ENCODE measurements at regions of chr19 and their contacts with region 1.

Region 1: DNA sequence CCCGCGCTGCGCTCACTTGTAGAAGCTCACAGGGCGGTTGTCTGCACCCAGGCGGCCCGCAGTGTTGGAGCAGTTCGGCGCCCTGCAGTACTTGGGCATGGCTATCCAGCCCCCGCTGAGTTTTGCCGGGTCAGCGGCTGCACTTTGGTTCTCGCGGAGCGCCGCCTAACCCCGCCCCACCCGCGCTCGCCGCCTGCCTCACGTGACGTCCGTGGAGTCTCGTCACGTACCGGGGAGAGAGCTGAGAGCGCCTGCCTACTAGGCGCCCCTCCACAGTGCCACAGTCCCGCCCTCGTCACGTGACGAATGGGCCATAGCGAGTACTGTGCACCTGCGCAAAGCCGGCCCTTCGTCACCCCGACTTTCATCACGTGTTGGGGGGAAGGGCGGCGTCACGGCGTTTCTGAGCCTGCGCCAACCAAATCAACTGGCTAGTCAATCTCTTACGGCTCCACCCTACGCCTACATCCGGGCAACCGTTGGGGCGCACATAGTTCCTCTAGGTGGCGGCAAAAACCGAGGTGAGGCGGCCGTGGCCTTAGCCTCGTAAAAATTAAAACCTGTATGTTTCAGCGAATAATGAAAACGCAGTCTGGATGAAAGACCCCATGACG is at the start of gene THAP8:
- DNase-seq: peak; percentile 100
- H3K4me3 Mint-ChIP-seq: peak within 1 kb of the TSS; percentile 94
- H3K27ac Mint-ChIP-seq: peak within 1 kb of the TSS; percentile 98
- H3K4me1 Mint-ChIP-seq: peaks cover 18% of the 10 kb centered on the region
- H3K27me3 Mint-ChIP-seq: no peaks in the 10 kb centered on the region
- total RNA-seq, gene THAP8: 1.1 to 1.2 TPM

Region 2: DNA sequence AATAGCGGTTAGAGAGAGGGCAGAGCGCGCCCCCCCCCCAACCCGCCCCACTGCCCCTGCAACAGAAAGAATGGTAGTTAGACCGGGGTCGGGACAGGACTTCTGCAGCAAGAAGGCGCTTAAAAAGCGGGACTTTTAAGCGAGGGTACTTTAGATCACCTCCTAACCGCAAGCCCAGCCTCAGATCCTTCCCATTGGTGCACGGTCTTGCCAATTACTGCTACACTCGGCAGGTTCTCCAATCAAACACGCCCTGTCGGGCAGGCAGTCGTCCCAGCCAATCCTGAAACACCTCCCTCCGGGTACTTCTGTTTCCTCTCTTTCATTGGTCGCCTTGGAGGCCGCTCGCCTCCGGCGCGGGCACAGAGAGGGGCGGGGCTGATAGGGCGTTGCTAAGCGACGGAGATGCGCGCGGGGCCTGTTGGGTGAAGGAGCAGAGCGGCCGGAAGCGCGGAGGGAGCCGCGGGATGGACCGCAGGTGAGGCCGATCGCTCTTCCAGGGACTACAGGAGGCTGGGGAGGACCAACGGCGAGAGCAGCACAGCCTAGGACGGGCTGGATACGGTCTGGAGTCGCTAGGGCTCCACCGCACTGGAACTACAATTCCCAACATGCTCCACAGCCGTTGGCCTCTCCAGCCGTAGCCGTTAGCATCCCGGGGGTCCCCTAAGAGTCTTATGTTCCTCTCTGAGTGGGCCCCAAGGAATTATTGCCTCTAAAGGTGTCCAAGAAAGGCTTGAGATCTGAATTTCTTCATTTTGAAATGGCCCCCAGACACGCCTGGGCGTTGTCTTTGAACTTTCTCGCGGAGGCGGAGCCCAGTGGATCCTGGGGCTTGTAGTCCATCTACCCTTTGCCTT is 296.2 kb before region 1 on chr19 and contains the start of gene PROSER3:
- CTCF ChIA-PET with region 1: no interaction called
- intact Hi-C with region 1: loop called (anchors 2 kb)
- DNase-seq: peak; percentile 99
- H3K4me3 Mint-ChIP-seq: peak within 1 kb of the TSS; percentile 90
- H3K27ac Mint-ChIP-seq: peak within 1 kb of the TSS; percentile 92
- H3K4me1 Mint-ChIP-seq: peaks cover 20% of the 10 kb centered on the region
- H3K27me3 Mint-ChIP-seq: peaks cover 8% of the 10 kb centered on the region
- total RNA-seq, gene PROSER3: 45.3 to 47.4 TPM

Region 3: GRCh38 chr19:35995048-35995993 is 58.9 kb before region 1 on chr19 and contains the start of gene SDHAF1:
- CTCF ChIA-PET with region 1: interaction called, 3 read pairs
- intact Hi-C with region 1: loop called (anchors 1 kb)
- DNase-seq: peak; percentile 97
- H3K4me3 Mint-ChIP-seq: peak within 1 kb of the TSS; percentile 97
- H3K27ac Mint-ChIP-seq: peak within 1 kb of the TSS; percentile 89
- H3K4me1 Mint-ChIP-seq: peaks cover 37% of the 10 kb centered on the region
- H3K27me3 Mint-ChIP-seq: no peaks in the 10 kb centered on the region
- total RNA-seq, gene SDHAF1: 13.1 to 13.8 TPM

Region 4: DNA sequence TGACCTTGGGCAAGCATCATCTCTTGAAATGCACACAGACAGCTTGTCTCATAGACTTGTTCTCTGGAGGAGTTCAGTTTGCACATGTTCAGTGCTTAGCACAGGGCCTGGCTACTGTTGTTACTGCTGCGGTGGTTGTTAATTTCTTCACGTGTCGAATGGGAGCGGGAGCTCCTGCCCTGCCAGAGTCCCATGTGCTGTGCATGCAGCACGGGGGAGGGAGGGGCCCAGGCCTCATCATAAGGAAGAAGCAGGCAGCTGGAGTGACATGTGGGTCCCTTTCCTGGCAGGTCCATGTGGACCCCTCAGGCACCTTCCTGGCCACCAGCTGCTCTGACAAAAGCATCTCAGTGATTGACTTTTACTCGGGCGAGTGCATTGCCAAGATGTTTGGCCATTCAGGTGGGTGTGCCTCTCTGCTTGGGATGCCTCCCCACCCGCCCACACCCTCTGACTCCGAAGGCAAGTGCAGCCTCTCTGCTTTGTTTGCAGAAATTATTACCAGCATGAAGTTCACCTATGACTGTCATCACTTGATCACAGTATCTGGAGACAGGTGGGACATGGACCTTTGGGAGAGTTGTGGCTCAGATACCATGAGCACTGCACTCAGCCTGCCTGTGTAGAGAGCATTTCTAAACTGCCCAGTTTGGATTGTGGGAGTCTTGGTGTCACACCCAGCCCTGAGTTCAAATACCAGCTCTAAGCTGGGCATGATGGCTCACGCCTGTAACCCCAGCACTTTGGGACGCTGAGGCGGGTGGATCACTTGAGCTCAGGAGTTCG is 36.9 kb after region 1 on chr19:
- CTCF ChIA-PET with region 1: no interaction called
- intact Hi-C with region 1: no loop called
- DNase-seq: no peak
- H3K4me3 Mint-ChIP-seq: no peak overlapping the region
- H3K27ac Mint-ChIP-seq: no peak overlapping the region
- H3K4me1 Mint-ChIP-seq: peaks cover 12% of the 10 kb centered on the region
- H3K27me3 Mint-ChIP-seq: no peaks in the 10 kb centered on the region

Region 5: GRCh38 chr19:36121486-36122124 is 67.4 kb after region 1 on chr19:
- CTCF ChIA-PET with region 1: no interaction called
- intact Hi-C with region 1: no loop called
- DNase-seq: no peak
- H3K4me3 Mint-ChIP-seq: no peak overlapping the region
- H3K27ac Mint-ChIP-seq: no peak overlapping the region
- H3K4me1 Mint-ChIP-seq: peaks cover 12% of the 10 kb centered on the region
- H3K27me3 Mint-ChIP-seq: no peaks in the 10 kb centered on the region

Region 6: DNA sequence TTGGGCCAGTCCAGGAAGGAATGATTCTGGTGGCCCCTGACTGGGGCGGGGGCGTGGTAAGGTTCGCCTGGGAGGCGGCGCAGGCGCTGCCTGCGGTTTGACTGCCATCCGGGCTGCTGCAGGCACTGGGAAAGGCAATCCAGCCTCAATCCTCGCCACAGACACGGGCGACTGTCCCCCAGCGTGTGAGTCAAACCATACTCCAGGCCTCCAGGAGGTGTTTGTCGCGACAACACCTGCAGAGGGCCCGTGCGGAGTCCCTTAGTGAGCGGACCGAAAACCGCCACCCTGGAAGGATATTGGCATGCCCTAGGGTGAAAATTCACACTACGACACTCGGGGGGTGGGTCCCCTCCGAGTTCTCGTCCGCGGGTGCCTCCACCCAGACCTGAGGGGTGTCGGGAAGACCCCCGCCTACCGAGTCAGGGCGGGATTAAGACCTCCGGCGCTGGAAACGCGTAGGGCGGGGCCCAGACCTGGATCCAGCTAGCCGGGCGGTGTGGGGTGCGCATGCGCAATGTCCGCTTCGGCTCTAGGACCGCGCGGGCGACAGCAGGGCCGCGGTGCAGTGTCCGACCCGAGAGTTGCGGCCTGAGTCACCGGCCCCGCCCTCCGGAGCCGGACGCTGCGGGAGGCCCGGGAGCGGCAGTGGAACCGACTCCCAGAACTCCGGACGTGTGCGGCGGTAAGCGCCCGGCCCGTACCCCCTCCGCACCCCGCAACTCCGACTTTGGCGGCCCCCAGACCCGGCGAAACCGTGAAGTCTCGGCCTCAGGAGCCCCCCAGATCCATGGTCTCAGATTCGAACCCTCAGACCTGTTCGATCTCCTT is 85.5 kb after region 1 on chr19 and contains the start of gene CAPNS1:
- CTCF ChIA-PET with region 1: no interaction called
- intact Hi-C with region 1: loop called (anchors 1 kb)
- DNase-seq: peak; percentile 92
- H3K4me3 Mint-ChIP-seq: peak within 1 kb of the TSS; percentile 90
- H3K27ac Mint-ChIP-seq: peak within 1 kb of the TSS; percentile 94
- H3K4me1 Mint-ChIP-seq: peaks cover 17% of the 10 kb centered on the region
- H3K27me3 Mint-ChIP-seq: no peaks in the 10 kb centered on the region
- total RNA-seq, gene CAPNS1: 301 to 307 TPM